Ascending aorta (tissue), 2 donors: ENCODE measurements at regions of chr2 and their contacts with region 1.

Region 1: DNA sequence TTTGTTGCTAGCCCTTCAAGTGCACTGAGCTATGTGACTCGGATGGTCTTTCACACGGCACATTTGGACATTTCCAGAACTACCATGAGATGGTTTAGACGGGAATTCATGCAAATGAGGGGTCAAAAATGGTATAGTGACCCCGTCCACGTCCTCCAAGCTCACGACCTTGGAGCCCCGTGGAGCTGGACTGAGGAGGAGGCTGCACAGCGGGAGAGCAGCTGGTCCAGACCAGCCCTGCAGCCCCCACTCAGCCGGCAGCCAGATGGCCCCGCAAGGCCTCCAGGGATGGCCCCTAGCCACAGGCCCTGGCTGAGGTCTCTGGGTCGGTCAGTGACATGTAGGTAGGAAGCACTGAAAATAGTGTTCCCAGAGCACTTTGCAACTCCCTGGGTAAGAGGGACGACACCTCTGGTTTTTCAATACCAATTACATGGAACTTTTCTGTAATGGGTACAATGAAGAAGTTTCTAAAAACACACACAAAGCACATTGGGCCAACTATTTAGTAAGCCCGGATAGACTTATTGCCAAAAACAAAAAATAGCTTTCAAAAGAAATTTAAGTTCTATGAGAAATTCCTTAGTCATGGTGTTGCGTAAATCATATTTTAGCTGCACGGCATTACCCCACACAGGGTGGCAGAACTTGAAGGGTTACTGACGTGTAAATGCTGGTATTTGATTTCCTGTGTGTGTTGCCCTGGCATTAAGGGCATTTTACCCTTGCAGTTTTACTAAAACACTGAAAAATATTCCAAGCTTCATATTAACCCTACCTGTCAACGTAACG is 88.8 kb downstream of the EPAS1 start:
- DNase-seq: peak in 1 of 2 donors; percentile 79
- H3K4me3 ChIP-seq: peak overlapping the region in 1 of 2 donors; percentile 20
- H3K27ac ChIP-seq: peak overlapping the region; percentile 67 to 81
- H3K4me1 ChIP-seq: peaks cover 4 to 15% of the 10 kb centered on the region in 2 donors
- H3K27me3 ChIP-seq: no peaks in the 10 kb centered on the region
- CTCF ChIP-seq: no peak

Region 2: DNA sequence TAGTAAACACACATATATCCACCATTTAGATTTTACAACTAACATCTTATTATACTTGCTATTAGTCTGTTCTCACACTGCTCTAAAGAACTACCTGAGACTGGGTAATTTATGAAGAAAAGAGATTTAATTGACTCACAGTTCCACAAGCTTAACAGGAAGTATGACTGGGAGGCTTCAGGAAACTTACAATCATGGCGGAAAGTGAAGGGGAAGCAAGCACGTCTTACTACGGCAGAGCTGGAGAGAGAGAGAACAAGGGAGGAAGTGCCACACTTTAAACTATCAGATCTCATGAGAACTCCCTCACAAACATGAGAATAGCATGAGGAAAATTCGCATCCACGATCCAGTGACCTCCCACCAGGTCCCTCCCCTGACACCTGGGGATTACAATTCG is 1783.5 kb before region 1 on chr2:
- intact Hi-C with region 1: no loop called
- DNase-seq: no peak
- H3K4me3 ChIP-seq: no peak overlapping the region
- H3K27ac ChIP-seq: no peak overlapping the region
- H3K4me1 ChIP-seq: no peaks in the 10 kb centered on the region
- H3K27me3 ChIP-seq: no peaks in the 10 kb centered on the region
- CTCF ChIP-seq: no peak

Region 3: GRCh38 chr2:45993476-45993991 is 392.4 kb before region 1 on chr2:
- intact Hi-C with region 1: loop called (anchors 5 kb)
- DNase-seq: peak in 1 of 2 donors; percentile 83
- H3K4me3 ChIP-seq: no peak overlapping the region
- H3K27ac ChIP-seq: peak overlapping the region; percentile 74 to 75
- H3K4me1 ChIP-seq: peaks cover 3 to 23% of the 10 kb centered on the region in 2 donors
- H3K27me3 ChIP-seq: no peaks in the 10 kb centered on the region
- CTCF ChIP-seq: peak; percentile 58 to 87 (median 79)

Region 4: DNA sequence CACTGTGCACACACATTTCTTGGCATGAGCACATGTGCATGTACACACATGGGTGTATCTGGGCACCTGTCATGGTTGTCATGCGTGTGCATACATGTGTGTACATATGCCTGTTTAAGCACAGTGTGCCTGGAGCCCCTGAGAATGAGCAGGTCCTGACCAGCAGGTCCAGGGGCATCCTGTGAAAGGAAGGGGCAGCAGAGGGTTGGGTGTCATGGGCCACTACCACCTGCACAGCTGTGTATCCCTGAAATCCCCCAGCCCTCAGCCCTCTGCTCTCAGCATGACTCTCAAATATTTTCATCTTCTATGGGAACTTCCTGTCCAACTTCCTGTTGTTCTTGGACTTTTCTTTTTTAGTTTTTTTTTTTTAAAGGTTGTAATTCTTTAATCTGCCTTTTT is 185.8 kb before region 1 on chr2:
- intact Hi-C with region 1: no loop called
- DNase-seq: no peak
- H3K4me3 ChIP-seq: no peak overlapping the region
- H3K27ac ChIP-seq: peak overlapping the region; percentile 47 to 52
- H3K4me1 ChIP-seq: peaks cover 5 to 7% of the 10 kb centered on the region in 2 donors
- H3K27me3 ChIP-seq: no peaks in the 10 kb centered on the region
- CTCF ChIP-seq: no peak

Region 5: DNA sequence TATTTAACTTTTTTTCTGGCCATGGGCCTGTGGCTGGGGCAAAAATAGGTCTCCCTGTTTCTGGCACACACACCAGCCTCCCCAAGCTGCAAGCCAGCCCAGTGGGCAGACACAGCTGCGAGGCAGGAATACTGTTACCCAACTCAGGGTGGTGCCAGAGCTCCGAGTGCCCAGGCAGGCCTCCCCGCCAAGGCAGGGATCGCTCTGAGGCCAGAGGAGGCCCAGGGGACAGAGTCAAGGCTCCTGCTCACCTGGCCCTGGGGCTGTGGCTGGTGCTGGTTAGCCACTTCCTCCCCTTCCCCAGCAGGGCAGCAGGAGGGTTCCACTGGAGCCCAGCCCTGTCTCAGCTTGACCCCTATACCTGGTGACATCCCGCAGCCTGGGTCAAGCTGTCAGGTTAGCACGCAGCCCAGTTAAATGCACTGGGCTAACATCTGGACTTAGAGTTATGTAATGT is 155.8 kb before region 1 on chr2:
- intact Hi-C with region 1: loop called (anchors 5 kb)
- DNase-seq: peak in 1 of 2 donors; percentile 74
- H3K4me3 ChIP-seq: no peak overlapping the region
- H3K27ac ChIP-seq: peak overlapping the region; percentile 24 to 42
- H3K4me1 ChIP-seq: peaks cover 0 to 8% of the 10 kb centered on the region in 2 donors
- H3K27me3 ChIP-seq: no peaks in the 10 kb centered on the region
- CTCF ChIP-seq: peak in 2 of 3 experiments; percentile 53 to 54

Region 6: GRCh38 chr2:46409753-46410152 is 23.8 kb after region 1 on chr2:
- intact Hi-C with region 1: loop called (anchors 1 kb)
- DNase-seq: no peak
- H3K4me3 ChIP-seq: no peak overlapping the region
- H3K27ac ChIP-seq: peak overlapping the region; percentile 6 to 52
- H3K4me1 ChIP-seq: peaks cover 0 to 11% of the 10 kb centered on the region in 2 donors
- H3K27me3 ChIP-seq: no peaks in the 10 kb centered on the region
- CTCF ChIP-seq: no peak

Region 7: DNA sequence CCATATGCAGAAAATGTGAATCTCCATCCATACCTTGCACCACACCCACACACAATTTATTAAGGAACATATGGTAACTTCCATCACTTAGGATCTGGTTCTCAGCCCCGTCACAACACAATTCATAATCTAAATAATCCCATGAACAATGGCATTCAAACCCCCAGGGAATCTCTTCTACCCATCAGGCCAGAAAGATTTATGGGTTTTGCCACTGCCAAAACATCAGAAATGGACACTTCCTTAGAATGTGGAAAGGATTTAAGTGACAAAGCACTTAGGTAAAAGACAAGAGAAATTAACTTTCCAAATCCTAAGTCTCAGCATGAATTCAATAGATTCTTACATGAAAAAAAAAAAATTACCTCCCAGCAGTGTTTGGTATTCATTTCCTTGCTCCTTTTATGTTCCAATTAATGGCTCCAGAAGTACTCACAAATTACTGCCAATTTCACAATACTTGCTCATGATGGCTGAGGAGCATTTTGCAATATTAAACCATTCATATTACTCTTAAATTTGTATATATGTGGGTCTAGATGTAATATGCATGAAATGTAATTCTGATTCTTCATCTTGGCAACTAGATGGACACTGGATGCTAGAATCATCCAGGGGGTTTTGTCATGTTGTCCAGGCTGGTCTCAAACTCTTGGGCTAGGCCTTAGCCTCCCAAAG is 36.9 kb after region 1 on chr2:
- intact Hi-C with region 1: no loop called
- DNase-seq: no peak
- H3K4me3 ChIP-seq: no peak overlapping the region
- H3K27ac ChIP-seq: no peak overlapping the region
- H3K4me1 ChIP-seq: no peaks in the 10 kb centered on the region
- H3K27me3 ChIP-seq: no peaks in the 10 kb centered on the region
- CTCF ChIP-seq: no peak